ENCODE measurements at regions of chr5 and their contacts with region 1.

Region 1: GRCh38 chr5:76175051-76175666 is 92.0 kb downstream of the SV2C start:
- DNase-seq: peak; percentile 53
- ATAC-seq: peak; percentile 27
- H3K4me3 Mint-ChIP-seq: peak overlapping the region; percentile 80
- H3K27ac Mint-ChIP-seq: peak overlapping the region; percentile 91
- H3K4me1 Mint-ChIP-seq: peaks cover 29% of the 10 kb centered on the region
- H3K27me3 Mint-ChIP-seq: no peaks in the 10 kb centered on the region

Region 2: GRCh38 chr5:75717082-75717922 is 457.9 kb before region 1 on chr5 and contains the start of gene POC5:
- POLR2A ChIA-PET with region 1: interaction called, 13 read pairs
- DNase-seq: peak; percentile 98
- ATAC-seq: peak; percentile 95
- H3K4me3 Mint-ChIP-seq: peak within 1 kb of the TSS; percentile 100
- H3K27ac Mint-ChIP-seq: peak within 1 kb of the TSS; percentile 99
- H3K4me1 Mint-ChIP-seq: peaks cover 24% of the 10 kb centered on the region
- H3K27me3 Mint-ChIP-seq: no peaks in the 10 kb centered on the region
- total RNA-seq, gene POC5: 16.8 to 23.0 TPM

Measured in activated naive CD8-positive, alpha-beta T cell treated with anti-CD3 and anti-CD28 coated beads, Interleukin-2, amount 10 ng/mL, durations not matched to agents 7 days and 5 days (primary cell).